Activated CD4-positive, alpha-beta T cell treated with anti-CD3 and anti-CD28 coated beads for 36 hours (primary cell): ENCODE measurements at regions of chr5 and their contacts with region 1.

Region 1: GRCh38 chr5:138128334-138128733 is 10.9 kb downstream of the NME5 start:
- DNase-seq: no peak
- ATAC-seq: no peak
- H3K4me3 Mint-ChIP-seq: no peak overlapping the region
- H3K27ac Mint-ChIP-seq: no peak overlapping the region
- H3K4me1 Mint-ChIP-seq: peaks cover 2% of the 10 kb centered on the region
- H3K27me3 Mint-ChIP-seq: no peaks in the 10 kb centered on the region

Region 2: GRCh38 chr5:137778772-137779564 is 349.4 kb before region 1 on chr5:
- CTCF ChIA-PET with region 1: interaction called, 21 read pairs
- POLR2A ChIA-PET with region 1: no interaction called
- intact Hi-C with region 1: loop called (anchors 1 kb)
- DNase-seq: no peak
- ATAC-seq: no peak
- H3K4me3 Mint-ChIP-seq: no peak overlapping the region
- H3K27ac Mint-ChIP-seq: no peak overlapping the region
- H3K4me1 Mint-ChIP-seq: no peaks in the 10 kb centered on the region
- H3K27me3 Mint-ChIP-seq: no peaks in the 10 kb centered on the region

Region 3: GRCh38 chr5:138065102-138065501 is 63.2 kb before region 1 on chr5:
- CTCF ChIA-PET with region 1: interaction called, 11 read pairs
- POLR2A ChIA-PET with region 1: no interaction called
- intact Hi-C with region 1: no loop called
- DNase-seq: peak; percentile 40
- ATAC-seq: no peak
- H3K4me3 Mint-ChIP-seq: no peak overlapping the region
- H3K27ac Mint-ChIP-seq: no peak overlapping the region
- H3K4me1 Mint-ChIP-seq: peaks cover 4% of the 10 kb centered on the region
- H3K27me3 Mint-ChIP-seq: no peaks in the 10 kb centered on the region

Region 4: DNA sequence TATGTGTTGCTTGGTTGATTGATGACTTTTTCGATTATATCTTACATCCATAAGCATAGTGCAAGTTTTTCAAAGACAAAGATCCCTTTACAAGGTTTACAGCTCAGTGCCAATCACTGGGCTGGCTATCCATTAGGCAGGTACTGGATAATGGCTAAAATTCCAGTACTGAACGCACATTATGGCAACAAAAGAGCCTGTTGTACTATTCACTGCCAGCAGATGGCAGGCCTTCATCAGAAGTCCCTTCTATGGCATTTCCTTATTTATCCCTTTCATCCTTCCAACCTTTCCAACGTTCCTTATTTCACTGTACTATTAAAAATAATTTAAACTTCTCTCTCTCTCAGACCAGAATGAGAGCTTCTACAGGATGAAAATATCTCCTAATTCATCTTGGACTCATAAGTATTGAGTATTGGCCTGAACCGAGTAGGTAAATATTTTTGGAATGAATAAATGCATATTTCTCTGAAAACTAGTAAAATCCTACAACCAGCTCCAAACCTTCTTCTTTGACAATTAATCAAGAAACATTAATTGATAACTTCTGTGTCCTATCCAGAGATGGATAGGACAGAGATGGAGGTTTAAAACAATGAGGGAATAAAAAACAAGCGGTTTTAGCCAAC is 51.2 kb before region 1 on chr5:
- CTCF ChIA-PET with region 1: interaction called, 127 read pairs
- POLR2A ChIA-PET with region 1: no interaction called
- intact Hi-C with region 1: loop called (anchors 1 kb)
- DNase-seq: peak; percentile 70
- ATAC-seq: no peak
- H3K4me3 Mint-ChIP-seq: no peak overlapping the region
- H3K27ac Mint-ChIP-seq: no peak overlapping the region
- H3K4me1 Mint-ChIP-seq: peaks cover 15% of the 10 kb centered on the region
- H3K27me3 Mint-ChIP-seq: no peaks in the 10 kb centered on the region

Region 5: GRCh38 chr5:138083702-138084101 is 44.6 kb before region 1 on chr5 and contains the start of gene WNT8A:
- CTCF ChIA-PET with region 1: interaction called, 127 read pairs
- POLR2A ChIA-PET with region 1: no interaction called
- intact Hi-C with region 1: no loop called
- DNase-seq: no peak
- ATAC-seq: no peak
- H3K4me3 Mint-ChIP-seq: no peak within 1 kb of the TSS
- H3K27ac Mint-ChIP-seq: no peak within 1 kb of the TSS
- H3K4me1 Mint-ChIP-seq: peaks cover 15% of the 10 kb centered on the region
- H3K27me3 Mint-ChIP-seq: peaks cover 2% of the 10 kb centered on the region
- total RNA-seq, gene WNT8A: not detected

Region 6: GRCh38 chr5:138138949-138139780 is 10.8 kb after region 1 on chr5 and contains the start of gene NME5:
- CTCF ChIA-PET with region 1: interaction called, 12 read pairs
- POLR2A ChIA-PET with region 1: no interaction called
- intact Hi-C with region 1: no loop called
- DNase-seq: peak; percentile 30
- ATAC-seq: peak; percentile 30
- H3K4me3 Mint-ChIP-seq: no peak within 1 kb of the TSS
- H3K27ac Mint-ChIP-seq: no peak within 1 kb of the TSS
- H3K4me1 Mint-ChIP-seq: peaks cover 3% of the 10 kb centered on the region
- H3K27me3 Mint-ChIP-seq: peaks cover 4% of the 10 kb centered on the region
- total RNA-seq, gene NME5: not detected